B cell (primary cell): ENCODE measurements at regions of chr19 and their contacts with region 1.

Region 1: GRCh38 chr19:14571695-14572490 is at the start of gene NDUFB7:
- DNase-seq: peak; percentile 96
- ATAC-seq: peak; percentile 85
- H3K4me3 ChIP-seq: peak within 1 kb of the TSS; percentile 56 to 97 (median 93)
- H3K4me3 Mint-ChIP-seq: peak within 1 kb of the TSS; percentile 97
- H3K27ac ChIP-seq: peak within 1 kb of the TSS; percentile 42 to 45
- H3K27ac Mint-ChIP-seq: peak within 1 kb of the TSS; percentile 93
- H3K4me1 ChIP-seq: peaks cover 29 to 46% of the 10 kb centered on the region in 2 donors
- H3K4me1 Mint-ChIP-seq: peaks cover 52% of the 10 kb centered on the region
- H3K27me3 ChIP-seq: no peaks in the 10 kb centered on the region
- H3K27me3 Mint-ChIP-seq: no peaks in the 10 kb centered on the region
- CTCF ChIP-seq: peak; percentile 85
- total RNA-seq, gene NDUFB7: 71.5 and 72.4 TPM in 2 replicates

Region 2: DNA sequence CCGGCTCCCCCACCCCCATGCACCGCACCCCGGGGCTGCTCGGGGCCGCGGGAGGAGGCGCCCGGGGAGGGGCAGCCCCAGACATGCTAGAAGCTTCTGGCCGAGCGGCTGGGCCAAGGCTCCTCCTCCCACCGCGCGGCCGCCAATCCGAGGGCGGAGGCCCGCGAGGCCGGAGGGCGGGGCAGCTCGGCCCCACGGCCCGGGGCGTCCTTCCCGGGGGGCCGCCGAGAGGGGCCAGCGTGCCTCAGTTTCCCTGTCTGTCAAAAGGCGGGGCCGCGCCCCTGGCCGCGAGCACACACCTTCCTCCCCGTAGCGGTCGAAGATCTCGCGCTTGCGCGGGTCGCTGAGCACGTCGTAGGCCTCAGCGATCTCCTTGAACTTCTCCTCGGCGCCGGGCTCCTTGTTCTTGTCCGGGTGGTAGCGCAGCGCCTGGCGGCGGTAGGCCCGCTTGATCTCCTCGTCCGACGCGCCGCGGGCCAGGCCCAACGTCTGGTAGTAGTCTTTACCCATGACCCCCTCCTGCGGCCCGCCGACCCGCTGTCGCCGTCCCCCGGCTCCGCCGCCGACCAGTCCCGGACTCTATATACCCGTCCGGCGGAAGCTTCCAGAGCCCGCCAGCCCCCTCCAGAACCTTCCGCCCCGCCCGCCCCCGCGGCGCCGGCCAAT is 53.9 kb before region 1 on chr19 and contains the start of gene DNAJB1:
- CTCF ChIA-PET with region 1: interaction called, 3 read pairs
- POLR2A ChIA-PET with region 1: no interaction called
- intact Hi-C with region 1: loop called (anchors 1 kb)
- DNase-seq: no peak
- ATAC-seq: peak; percentile 52
- H3K4me3 ChIP-seq: peak within 1 kb of the TSS; percentile 88 to 98 (median 94)
- H3K4me3 Mint-ChIP-seq: peak within 1 kb of the TSS; percentile 96
- H3K27ac ChIP-seq: peak within 1 kb of the TSS; percentile 93 to 95
- H3K27ac Mint-ChIP-seq: peak within 1 kb of the TSS; percentile 99
- H3K4me1 ChIP-seq: peaks cover 44 to 48% of the 10 kb centered on the region in 2 donors
- H3K4me1 Mint-ChIP-seq: peaks cover 55% of the 10 kb centered on the region
- H3K27me3 ChIP-seq: no peaks in the 10 kb centered on the region
- H3K27me3 Mint-ChIP-seq: no peaks in the 10 kb centered on the region
- CTCF ChIP-seq: no peak
- total RNA-seq, gene DNAJB1: 72.8 and 82.1 TPM in 2 replicates

Region 3: DNA sequence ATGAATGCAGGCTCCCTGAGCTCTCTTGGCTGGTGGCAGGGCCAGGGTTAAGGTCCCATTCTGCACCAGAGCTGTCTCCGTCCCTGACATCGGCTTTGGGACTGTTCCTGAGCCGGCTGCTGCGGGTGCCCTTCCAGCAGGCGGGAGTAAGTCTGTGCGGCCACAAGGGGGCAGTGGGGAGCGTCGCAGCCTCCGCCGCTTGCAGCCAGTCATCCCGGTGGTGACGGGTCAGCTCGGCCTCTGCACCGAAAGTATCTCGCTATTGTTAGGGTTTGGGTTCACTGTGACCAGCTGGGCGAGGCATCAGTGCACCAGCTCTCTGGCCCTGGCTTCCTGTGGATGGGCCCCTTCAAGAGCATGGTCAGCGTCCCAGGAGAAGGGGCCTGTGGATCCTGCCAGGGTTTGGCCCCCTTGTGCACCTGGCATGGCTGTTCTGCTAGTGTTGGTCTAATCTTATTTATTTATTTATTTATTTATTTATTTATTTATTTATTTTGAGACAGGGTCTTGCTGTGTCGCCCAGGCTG is 15.2 kb before region 1 on chr19:
- CTCF ChIA-PET with region 1: interaction called, 16 read pairs
- POLR2A ChIA-PET with region 1: no interaction called
- intact Hi-C with region 1: no loop called
- DNase-seq: peak; percentile 80
- ATAC-seq: peak; percentile 82
- H3K4me3 ChIP-seq: no peak overlapping the region
- H3K4me3 Mint-ChIP-seq: peak overlapping the region; percentile 41
- H3K27ac ChIP-seq: no peak overlapping the region
- H3K27ac Mint-ChIP-seq: no peak overlapping the region
- H3K4me1 ChIP-seq: peaks cover 4 to 19% of the 10 kb centered on the region in 2 donors
- H3K4me1 Mint-ChIP-seq: peaks cover 30% of the 10 kb centered on the region
- H3K27me3 ChIP-seq: no peaks in the 10 kb centered on the region
- H3K27me3 Mint-ChIP-seq: no peaks in the 10 kb centered on the region
- CTCF ChIP-seq: peak; percentile 92

Region 4: DNA sequence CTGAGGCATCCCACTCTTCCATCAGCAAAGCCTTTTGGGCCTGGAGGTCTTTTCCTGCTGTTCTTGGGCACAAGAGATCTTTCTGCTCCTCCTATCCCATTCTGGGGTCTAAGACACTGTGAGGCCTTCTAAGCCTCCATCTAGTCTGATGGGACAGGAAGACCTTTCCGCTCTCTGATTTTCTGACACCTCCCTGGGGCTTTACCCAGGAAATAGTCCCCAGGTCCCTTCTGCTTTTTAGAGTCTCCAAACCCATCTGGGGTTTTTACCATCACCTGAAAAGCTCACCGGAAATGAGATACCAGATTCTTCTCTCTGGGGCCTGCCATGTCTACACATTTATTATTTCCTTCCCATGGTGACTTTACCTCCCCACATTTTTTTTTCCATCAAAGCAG is 32.1 kb after region 1 on chr19:
- CTCF ChIA-PET with region 1: interaction called, 56 read pairs
- POLR2A ChIA-PET with region 1: interaction called, 3 read pairs
- intact Hi-C with region 1: loop called (anchors 1 kb)
- DNase-seq: peak; percentile 89
- ATAC-seq: peak; percentile 90
- H3K4me3 ChIP-seq: peak overlapping the region in 2 of 5 experiments; percentile 22 to 26
- H3K4me3 Mint-ChIP-seq: peak overlapping the region; percentile 67
- H3K27ac ChIP-seq: peak overlapping the region; percentile 85 to 94
- H3K27ac Mint-ChIP-seq: peak overlapping the region; percentile 83
- H3K4me1 ChIP-seq: peaks cover 54% of the 10 kb centered on the region in 2 donors
- H3K4me1 Mint-ChIP-seq: peaks cover 63% of the 10 kb centered on the region
- H3K27me3 ChIP-seq: no peaks in the 10 kb centered on the region
- H3K27me3 Mint-ChIP-seq: no peaks in the 10 kb centered on the region
- CTCF ChIP-seq: no peak

Region 5: DNA sequence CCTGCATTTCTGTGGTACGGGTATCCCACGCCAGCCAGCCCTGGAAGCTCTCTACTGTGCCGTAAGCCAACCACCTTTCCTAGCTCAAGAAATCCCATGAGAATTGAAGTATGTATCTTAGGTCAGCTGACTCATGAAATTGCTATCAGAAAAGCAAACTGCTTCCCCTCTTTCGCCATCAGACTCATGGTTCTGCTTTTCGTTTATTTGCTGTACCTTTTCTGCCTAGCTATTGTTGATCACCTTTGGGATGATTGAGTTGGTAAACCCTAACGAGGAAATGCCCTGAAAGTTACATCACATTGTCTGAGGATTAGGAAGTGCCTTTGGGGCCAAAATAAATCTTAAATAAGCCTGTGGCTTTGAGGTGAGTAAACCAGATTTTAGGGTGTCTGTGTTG is 102.9 kb after region 1 on chr19 and contains the start of gene ADGRE3:
- CTCF ChIA-PET with region 1: interaction called, 54 read pairs
- POLR2A ChIA-PET with region 1: interaction called, 5 read pairs
- intact Hi-C with region 1: loop called (anchors 5 kb)
- DNase-seq: peak; percentile 67
- ATAC-seq: peak; percentile 69
- H3K4me3 ChIP-seq: peak within 1 kb of the TSS in 1 of 5 experiments; percentile 72
- H3K4me3 Mint-ChIP-seq: peak within 1 kb of the TSS; percentile 77
- H3K27ac ChIP-seq: peak within 1 kb of the TSS in 1 of 2 donors; percentile 12
- H3K27ac Mint-ChIP-seq: peak within 1 kb of the TSS; percentile 88
- H3K4me1 ChIP-seq: peaks cover 24 to 31% of the 10 kb centered on the region in 2 donors
- H3K4me1 Mint-ChIP-seq: peaks cover 29% of the 10 kb centered on the region
- H3K27me3 ChIP-seq: no peaks in the 10 kb centered on the region
- H3K27me3 Mint-ChIP-seq: no peaks in the 10 kb centered on the region
- CTCF ChIP-seq: no peak
- total RNA-seq, gene ADGRE3: 0.17 TPM in 1 of 2 replicates, not detected in the other

Region 6: DNA sequence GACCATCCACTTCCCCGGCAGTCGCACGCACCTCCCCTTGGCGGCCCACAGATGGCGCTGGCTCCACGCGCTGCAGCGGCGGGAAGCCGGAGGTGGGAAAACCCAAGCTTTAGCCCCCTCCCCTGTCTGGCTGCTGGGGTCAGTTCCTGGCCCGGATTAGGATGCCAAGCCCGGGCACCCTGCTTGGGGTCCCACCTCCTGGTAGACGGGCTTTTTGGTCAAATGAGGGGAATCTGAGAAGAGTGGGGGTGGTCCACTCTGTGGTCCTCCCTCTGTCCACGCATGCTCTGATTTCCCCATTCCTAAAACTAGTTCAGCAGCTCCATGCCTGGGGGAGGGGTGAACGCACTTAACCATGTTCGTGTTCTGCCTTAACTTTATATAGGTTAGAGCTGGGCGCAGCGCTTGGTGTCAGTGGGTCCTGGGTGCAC is 214.5 kb after region 1 on chr19:
- CTCF ChIA-PET with region 1: no interaction called
- POLR2A ChIA-PET with region 1: no interaction called
- intact Hi-C with region 1: loop called (anchors 5 kb)
- DNase-seq: peak; percentile 52
- ATAC-seq: peak; percentile 44
- H3K4me3 ChIP-seq: no peak overlapping the region
- H3K4me3 Mint-ChIP-seq: peak overlapping the region; percentile 69
- H3K27ac ChIP-seq: no peak overlapping the region
- H3K27ac Mint-ChIP-seq: peak overlapping the region; percentile 63
- H3K4me1 ChIP-seq: peaks cover 20 to 36% of the 10 kb centered on the region in 2 donors
- H3K4me1 Mint-ChIP-seq: peaks cover 33% of the 10 kb centered on the region
- H3K27me3 ChIP-seq: peaks cover 0 to 3% (median 0%) of the 10 kb centered on the region in 4 experiments
- H3K27me3 Mint-ChIP-seq: peaks cover 3% of the 10 kb centered on the region
- CTCF ChIP-seq: peak; percentile 87